Transverse colon (tissue), 4 donors: ENCODE measurements at regions of chr10 and their contacts with region 1.

Region 1: DNA sequence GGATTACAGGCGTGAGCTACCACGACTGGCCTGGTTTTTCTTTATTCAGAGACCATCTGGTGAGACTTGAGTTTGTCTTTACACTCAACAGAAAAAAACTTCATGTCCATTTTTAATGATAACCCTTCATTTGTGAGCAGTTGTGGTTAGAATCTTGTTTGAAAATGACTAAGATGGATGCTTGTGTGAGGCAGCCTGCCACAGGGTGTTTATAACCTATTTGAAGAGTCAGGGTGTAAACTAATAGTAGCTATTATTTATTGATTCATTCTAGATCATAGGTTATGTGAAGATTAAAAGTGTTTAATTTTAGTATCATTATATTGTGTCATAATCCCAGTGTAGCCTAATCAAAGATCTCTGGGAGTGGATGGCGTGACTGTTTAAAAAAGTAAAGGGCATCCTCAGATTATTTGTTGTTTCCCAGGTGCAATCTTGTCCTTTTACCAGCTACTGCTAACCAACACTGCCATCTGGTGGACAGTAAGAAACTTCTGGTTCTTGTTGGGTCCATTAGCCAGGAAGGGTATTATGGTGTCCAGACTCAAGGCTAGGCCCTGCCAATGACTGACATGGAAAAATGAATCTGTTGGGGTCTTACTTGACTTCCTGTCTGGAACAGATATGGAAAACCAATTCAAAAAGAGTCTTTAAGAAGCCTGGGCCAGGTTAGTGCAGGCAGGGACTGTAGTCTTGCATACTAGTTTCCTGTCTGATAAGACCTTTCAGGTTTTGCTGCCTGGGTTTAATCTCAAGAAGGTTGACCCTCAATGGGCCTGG is 24.9 kb downstream of the NRBF2 start:
- DNase-seq: no peak
- H3K4me3 ChIP-seq: no peak overlapping the region
- H3K27ac ChIP-seq: no peak overlapping the region
- H3K4me1 ChIP-seq: peaks cover 16 to 30% (median 18%) of the 10 kb centered on the region in 4 donors
- H3K27me3 ChIP-seq: no peaks in the 10 kb centered on the region
- CTCF ChIP-seq: peak; percentile 74 to 83 (median 79)
- EP300 ChIP-seq: no peak
- POLR2A ChIP-seq: no peak

Region 2: GRCh38 chr10:62707810-62708209 is 450.2 kb before region 1 on chr10:
- in situ Hi-C with region 1: no loop called
- intact Hi-C with region 1: no loop called
- DNase-seq: no peak
- H3K4me3 ChIP-seq: no peak overlapping the region
- H3K27ac ChIP-seq: no peak overlapping the region
- H3K4me1 ChIP-seq: no peaks in the 10 kb centered on the region
- H3K27me3 ChIP-seq: no peaks in the 10 kb centered on the region
- CTCF ChIP-seq: no peak
- EP300 ChIP-seq: no peak
- POLR2A ChIP-seq: no peak

Region 3: DNA sequence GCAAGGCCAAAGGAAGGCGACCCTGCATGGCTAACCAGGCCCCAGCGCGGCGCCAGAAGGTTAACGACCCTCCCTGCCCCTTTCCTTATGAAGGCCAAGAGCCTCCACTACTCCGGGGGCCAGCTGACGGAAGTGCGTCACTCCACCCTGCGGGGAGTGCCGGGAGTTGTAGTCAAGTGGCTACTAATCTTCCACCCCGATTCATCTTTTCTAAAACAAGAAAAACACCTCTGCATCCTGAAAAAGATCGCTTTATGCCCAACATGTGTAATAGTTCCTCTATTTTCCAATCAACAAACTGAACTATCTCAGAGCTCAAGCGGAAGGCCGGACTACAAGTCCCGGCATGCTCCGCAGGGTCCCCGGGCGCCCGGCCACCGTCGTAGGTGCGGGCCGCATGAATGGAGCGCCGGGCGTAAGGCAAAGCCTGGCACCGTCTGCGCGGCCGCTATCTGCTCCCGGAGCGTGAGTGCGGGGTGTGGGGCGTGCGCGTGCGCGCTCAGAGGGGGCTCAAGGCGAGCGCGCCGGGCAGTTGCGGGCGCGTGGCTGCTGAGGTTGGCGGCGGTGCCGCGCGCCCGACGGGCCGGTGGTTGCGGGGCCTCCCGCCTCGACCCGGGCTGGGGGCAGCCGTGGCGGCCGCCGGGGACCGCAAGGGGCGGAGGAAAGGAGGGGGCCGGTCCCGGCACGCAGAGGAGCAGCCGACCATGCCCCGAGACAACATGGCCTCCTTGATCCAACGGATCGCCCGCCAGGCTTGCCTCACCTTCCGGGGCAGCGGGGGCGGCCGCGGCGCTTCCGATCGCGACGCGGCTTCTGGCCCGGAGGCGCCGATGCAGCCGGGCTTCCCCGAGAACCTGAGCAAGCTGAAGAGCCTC is 353.4 kb before region 1 on chr10 and contains the start of gene ADO:
- in situ Hi-C with region 1: loop called in 2 of 4 experiments (anchors 25 kb)
- intact Hi-C with region 1: loop called (anchors 10 kb)
- DNase-seq: peak; percentile 85
- H3K4me3 ChIP-seq: peak within 1 kb of the TSS; percentile 55 to 97 (median 74)
- H3K27ac ChIP-seq: peak within 1 kb of the TSS; percentile 89 to 98 (median 92)
- H3K4me1 ChIP-seq: peaks cover 11 to 30% (median 23%) of the 10 kb centered on the region in 4 donors
- H3K27me3 ChIP-seq: peaks cover 3% of the 10 kb centered on the region
- CTCF ChIP-seq: peak in 1 of 5 experiments; percentile 40
- EP300 ChIP-seq: no peak
- POLR2A ChIP-seq: peak; percentile 48
- total RNA-seq, gene ADO: 9.6 to 25.4 (median 15.0) TPM

Region 4: DNA sequence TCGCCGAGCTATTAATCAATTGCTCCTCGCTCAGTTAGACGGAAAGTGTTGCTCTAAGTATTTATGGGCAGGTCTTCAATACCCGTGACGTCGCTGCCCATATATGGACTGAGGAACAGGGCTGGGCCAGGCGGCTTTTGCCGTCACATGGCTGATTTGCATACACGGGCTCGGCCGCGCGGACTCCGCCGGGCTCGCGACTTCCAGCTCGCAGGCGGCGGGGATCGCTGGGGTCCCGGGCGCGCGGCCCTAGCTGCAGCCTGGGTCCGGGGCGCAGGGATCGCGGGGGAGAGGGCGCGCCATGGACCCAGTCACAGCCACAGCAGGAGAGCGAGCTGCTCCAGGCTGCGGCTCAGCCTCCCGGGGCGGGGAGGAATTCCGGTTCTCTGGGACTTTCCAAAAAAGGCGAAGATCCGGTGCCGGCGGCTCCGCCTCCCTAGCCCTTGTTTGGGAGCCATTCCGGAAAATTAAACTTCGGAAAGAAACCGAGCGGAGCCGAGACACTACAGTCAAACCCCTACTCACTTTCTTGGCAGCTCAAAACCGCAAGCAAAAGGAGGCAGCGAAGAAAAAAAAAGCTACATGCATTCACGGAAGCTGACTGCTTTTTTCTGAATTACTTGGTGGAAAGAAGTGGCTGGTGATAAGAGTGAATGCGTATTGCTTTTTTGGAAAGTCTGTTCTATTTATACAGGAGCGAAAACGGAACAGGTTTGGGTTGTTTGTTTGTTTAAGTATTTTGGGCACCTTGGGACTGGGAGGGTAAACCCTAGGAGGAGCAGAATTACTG is 341.5 kb before region 1 on chr10 and contains the start of gene EGR2:
- in situ Hi-C with region 1: loop called in 2 of 4 experiments (anchors 25 kb)
- intact Hi-C with region 1: no loop called
- DNase-seq: peak; percentile 94
- H3K4me3 ChIP-seq: peak within 1 kb of the TSS; percentile 77 to 87 (median 80)
- H3K27ac ChIP-seq: peak within 1 kb of the TSS; percentile 82 to 94 (median 90)
- H3K4me1 ChIP-seq: peaks cover 8 to 35% (median 31%) of the 10 kb centered on the region in 4 donors
- H3K27me3 ChIP-seq: peaks cover 56% of the 10 kb centered on the region
- CTCF ChIP-seq: no peak
- EP300 ChIP-seq: no peak
- POLR2A ChIP-seq: no peak
- total RNA-seq, gene EGR2: 0.82 to 1.3 TPM in 2 of 4 donors, not detected in the others